Right ventricle myocardium inferior (tissue), 1 donor: ENCODE measurements at regions of chr2 and their contacts with region 1.

Region 1: GRCh38 chr2:106542811-106543259 is 55.7 kb downstream of the CD8B2 start:
- DNase-seq: peak; percentile 80
- ATAC-seq: peak; percentile 88

Region 2: DNA sequence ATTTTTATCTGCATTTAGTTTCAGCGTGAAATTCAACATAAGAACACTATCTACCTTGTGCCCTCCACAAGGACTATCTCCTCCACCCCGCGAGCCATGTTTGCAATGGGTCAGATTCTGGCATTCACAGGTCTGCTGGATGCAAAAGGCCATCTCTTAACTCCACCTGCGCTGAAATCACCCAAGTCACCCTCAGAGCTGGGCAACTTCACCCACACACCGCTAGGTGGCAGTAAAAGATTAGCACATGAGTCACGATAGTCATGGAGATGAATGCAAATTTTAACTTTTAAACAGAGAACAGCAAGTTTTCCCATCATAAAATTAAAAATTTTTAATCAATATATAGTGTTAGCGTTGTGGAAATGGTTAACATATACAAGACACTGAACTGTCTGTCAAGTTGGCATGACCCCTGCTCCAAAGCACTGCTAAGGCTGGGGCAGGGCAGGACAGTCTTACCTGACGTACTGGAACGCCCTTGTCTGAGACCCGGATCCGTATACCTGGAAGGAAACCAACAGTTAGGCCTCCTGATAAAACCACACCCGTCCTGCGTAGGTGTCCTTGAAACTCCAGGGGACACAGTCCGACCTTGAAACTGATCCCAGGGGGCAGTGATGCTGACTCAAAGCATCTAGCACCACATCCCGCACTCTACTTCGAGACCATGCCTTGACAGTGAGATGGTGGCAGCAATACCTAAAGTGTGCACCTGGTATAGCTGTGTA is 438.3 kb before region 1 on chr2:
- intact Hi-C with region 1: loop called (anchors 2 kb)
- DNase-seq: no peak
- ATAC-seq: no peak

Region 3: GRCh38 chr2:106342831-106343251 is 200.0 kb before region 1 on chr2:
- intact Hi-C with region 1: no loop called
- DNase-seq: no peak
- ATAC-seq: no peak